Stomach (tissue), 19 donors: ENCODE measurements at regions of chr4 and their contacts with region 1.

Region 1: GRCh38 chr4:2761035-2761923 is 5.1 kb upstream of the TNIP2 start:
- DNase-seq: peak; percentile 89 to 90
- H3K4me3 ChIP-seq: no peak overlapping the region
- H3K27ac ChIP-seq: peak overlapping the region; percentile 68 to 90 (median 88)
- H3K4me1 ChIP-seq: peaks cover 22 to 58% (median 40%) of the 10 kb centered on the region in 4 donors
- H3K27me3 ChIP-seq: no peaks in the 10 kb centered on the region
- CTCF ChIP-seq: peak in 1 of 7 experiments; percentile 24
- EP300 ChIP-seq: no peak
- POLR2A ChIP-seq: no peak

Region 2: GRCh38 chr4:2135083-2135482 is 626.2 kb before region 1 on chr4:
- intact Hi-C with region 1: no loop called
- DNase-seq: peak in 1 of 2 donors; percentile 69
- H3K4me3 ChIP-seq: no peak overlapping the region
- H3K27ac ChIP-seq: no peak overlapping the region
- H3K4me1 ChIP-seq: no peaks in the 10 kb centered on the region
- H3K27me3 ChIP-seq: no peaks in the 10 kb centered on the region
- CTCF ChIP-seq: no peak
- EP300 ChIP-seq: no peak
- POLR2A ChIP-seq: no peak

Region 3: DNA sequence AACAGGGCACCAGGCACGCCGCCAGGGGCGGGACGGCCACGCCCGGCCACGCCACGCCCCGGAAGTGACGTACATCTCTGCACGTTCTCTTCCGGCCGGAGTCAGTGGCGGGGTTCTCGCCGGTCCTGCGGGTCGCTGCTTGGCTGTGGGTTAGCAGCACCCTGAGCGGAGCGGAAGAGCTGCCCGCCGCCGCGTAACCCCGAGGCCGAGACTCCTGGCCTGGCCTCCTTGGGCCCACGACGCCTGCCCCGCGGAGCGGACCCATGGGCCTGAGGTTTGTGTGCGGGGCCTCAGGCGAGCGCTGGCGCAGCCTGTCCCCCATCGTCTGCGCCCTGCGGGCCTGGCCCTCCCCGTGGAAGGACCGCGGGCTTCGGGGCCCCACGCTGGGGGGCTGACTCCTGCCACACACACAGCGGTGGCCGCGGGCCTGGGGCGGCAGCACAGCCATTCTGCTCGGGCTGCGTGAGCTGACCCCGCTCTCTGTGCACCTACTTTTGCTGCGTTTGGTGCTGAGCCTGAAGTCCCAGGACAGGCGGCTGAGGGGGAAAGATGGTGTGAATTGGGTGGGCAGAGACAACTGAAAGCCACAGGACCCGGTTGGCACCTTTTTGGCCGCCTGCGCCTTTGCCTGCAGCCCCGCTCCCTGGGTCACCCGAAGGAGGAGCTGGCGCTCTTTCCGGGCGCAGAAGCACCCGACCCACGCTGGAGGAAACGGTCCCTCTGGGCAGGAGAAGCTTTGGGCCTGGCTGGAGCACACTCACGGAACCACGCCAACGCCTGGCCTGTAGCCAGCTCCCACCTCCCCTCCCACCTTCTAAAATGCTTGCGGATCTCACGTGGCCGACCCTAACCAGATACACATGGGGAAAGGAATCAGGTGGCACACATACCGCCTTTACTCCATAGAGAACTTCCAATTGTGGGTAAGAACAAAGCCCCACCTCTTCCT is 173.8 kb after region 1 on chr4:
- intact Hi-C with region 1: loop called (anchors 10 kb)
- DNase-seq: peak; percentile 98
- H3K4me3 ChIP-seq: peak overlapping the region; percentile 78 to 93 (median 88)
- H3K27ac ChIP-seq: peak overlapping the region; percentile 94 to 99 (median 97)
- H3K4me1 ChIP-seq: peaks cover 61 to 71% (median 69%) of the 10 kb centered on the region in 4 donors
- H3K27me3 ChIP-seq: no peaks in the 10 kb centered on the region
- CTCF ChIP-seq: peak in 1 of 7 experiments; percentile 30
- EP300 ChIP-seq: no peak
- POLR2A ChIP-seq: peak in 2 of 4 donors; percentile 82 to 93

Region 4: DNA sequence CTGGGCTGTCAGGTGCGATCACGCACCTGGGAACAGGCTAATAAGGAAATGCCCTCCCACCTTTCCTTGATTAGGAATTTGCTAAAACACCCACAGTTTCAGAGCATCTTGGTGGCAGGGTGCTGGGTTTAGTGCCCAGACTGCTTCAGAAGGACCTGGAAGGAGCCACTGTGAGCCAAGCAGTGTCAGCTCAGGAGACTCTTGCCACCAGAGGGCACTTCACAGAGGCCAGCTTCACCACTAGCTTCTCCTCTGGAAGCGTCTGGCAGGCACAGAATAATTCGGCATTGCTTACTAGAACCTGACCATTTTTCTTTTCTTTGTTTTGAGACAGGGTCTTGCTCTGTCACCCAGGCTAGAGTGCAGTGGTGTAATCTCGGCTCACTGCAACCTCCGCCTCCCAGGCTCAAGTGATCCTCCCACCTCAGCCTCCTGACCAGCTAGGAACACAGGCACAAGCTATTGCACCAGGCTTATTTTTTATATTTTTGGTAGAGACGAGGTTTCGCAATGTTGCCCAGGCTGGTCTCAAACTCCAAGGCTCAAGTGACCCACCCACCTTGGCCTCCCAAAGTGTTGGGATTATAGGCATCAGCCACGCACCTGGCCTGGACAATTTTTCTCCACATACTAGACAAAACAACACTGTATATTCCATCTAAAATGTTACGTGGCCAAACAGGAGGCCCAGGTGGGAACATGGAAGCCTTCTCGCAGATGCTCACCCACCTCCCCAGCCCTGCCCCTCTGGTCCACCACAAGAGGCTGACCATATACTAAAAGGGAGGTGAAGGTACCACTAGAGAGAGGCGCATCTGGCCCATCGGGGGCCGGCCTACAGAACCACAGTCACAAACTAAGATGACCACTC is 187.9 kb after region 1 on chr4:
- intact Hi-C with region 1: no loop called
- DNase-seq: peak; percentile 62 to 67
- H3K4me3 ChIP-seq: no peak overlapping the region
- H3K27ac ChIP-seq: no peak overlapping the region
- H3K4me1 ChIP-seq: peaks cover 0 to 8% (median 0%) of the 10 kb centered on the region in 4 donors
- H3K27me3 ChIP-seq: no peaks in the 10 kb centered on the region
- CTCF ChIP-seq: peak in 3 of 7 experiments; percentile 19 to 45 (median 25)
- EP300 ChIP-seq: no peak
- POLR2A ChIP-seq: no peak

Region 5: GRCh38 chr4:3037957-3038461 is 276.7 kb after region 1 on chr4:
- intact Hi-C with region 1: loop called (anchors 10 kb)
- DNase-seq: peak in 1 of 2 donors; percentile 60
- H3K4me3 ChIP-seq: peak overlapping the region; percentile 3 to 25 (median 17)
- H3K27ac ChIP-seq: peak overlapping the region in 1 of 5 donors; percentile 20
- H3K4me1 ChIP-seq: peaks cover 25 to 44% (median 34%) of the 10 kb centered on the region in 4 donors
- H3K27me3 ChIP-seq: peaks cover 0 to 27% (median 0%) of the 10 kb centered on the region in 3 donors
- CTCF ChIP-seq: no peak
- EP300 ChIP-seq: no peak
- POLR2A ChIP-seq: no peak